ENCODE measurements at regions of chr1 and their contacts with region 1.

Region 1: DNA sequence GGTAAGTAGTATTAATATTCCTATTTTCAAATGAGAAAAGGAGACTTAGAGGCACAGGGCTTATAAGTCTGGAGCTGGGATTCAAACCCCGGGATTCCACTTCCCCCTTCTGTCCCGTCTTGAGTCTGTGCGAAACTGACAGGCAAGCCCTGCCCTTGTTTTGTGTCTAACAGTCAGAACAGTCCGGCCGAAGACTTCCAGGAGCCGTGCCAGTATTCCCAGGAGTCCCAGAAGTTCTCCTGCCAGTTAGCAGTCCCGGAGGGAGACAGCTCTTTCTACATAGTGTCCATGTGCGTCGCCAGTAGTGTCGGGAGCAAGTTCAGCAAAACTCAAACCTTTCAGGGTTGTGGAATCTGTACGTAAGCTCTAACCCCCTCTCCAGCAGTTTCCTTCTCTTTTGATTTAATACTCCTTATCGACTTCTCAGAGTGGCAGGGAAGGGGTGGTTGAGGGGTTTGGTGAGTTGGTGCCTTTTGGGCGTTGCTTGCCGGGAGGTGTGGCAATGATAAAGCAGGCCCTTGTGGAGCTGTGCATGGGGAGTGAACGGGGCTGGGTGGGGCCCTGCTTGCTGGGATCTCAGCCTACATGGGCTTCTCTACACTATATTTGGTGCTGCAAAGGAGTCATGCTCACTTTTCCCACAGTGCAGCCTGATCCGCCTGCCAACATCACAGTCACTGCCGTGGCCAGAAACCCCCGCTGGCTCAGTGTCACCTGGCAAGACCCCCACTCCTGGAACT is 29.4 kb downstream of the IL6R start:
- DNase-seq: no peak
- H3K4me3 ChIP-seq: no peak overlapping the region
- H3K27ac ChIP-seq: no peak overlapping the region
- H3K4me1 ChIP-seq: peaks cover 38% of the 10 kb centered on the region
- H3K27me3 ChIP-seq: no peaks in the 10 kb centered on the region
- CTCF ChIP-seq: no peak

Region 2: GRCh38 chr1:154352581-154353459 is 81.7 kb before region 1 on chr1:
- CTCF ChIA-PET with region 1: no interaction called
- dilution Hi-C with region 1: loop called (anchors 5 kb)
- in situ Hi-C with region 1: no loop called
- intact Hi-C with region 1: no loop called
- DNase-seq: peak; percentile 9
- H3K4me3 ChIP-seq: peak overlapping the region; percentile 0 to 36 (median 33)
- H3K27ac ChIP-seq: no peak overlapping the region
- H3K4me1 ChIP-seq: peaks cover 15% of the 10 kb centered on the region
- H3K27me3 ChIP-seq: no peaks in the 10 kb centered on the region
- CTCF ChIP-seq: no peak

Region 3: DNA sequence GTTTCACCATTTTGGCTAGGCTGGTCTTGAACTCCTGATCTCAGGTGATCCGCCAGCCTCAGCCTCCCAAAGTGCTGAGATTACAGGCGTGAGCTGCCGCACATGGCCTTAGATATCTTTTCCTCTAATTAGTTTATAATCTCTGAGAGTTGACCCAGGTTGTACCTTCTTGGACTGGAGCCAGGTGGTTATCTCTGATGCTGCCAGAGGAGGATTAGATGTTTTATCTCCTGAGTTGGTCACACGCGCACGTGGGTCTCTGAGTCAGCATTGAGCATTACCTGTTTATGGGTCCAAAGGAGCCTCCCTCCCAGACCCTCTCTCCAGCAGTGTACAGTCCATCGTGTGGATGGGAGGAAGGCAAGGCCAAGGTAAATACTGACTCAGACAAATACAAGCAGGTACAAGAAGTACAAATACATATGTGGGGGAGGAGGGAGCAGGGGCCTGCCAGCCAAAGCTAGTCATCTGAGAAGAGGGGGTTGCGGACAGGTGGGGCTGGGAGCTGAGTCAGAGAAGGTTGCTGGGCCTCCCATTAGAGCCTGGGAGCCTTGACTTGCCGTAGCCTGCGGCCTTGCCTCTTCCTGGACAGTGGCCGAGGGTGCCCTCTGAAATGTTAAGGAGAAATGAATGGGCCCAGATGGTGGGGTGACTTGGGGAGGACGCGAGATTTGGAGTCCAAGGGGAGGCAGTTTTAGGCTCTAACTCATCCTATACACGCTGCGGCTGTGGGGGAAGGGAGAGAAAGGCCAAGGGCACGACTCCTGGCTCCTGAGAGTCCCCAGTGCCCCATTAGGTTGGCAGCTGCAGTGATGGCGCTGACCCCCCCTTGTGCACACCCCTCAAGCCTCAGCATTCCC is 16.2 kb before region 1 on chr1:
- CTCF ChIA-PET with region 1: no interaction called
- dilution Hi-C with region 1: no loop called
- in situ Hi-C with region 1: no loop called
- intact Hi-C with region 1: loop called (anchors 1 kb)
- DNase-seq: peak; percentile 99
- H3K4me3 ChIP-seq: no peak overlapping the region
- H3K27ac ChIP-seq: peak overlapping the region; percentile 79
- H3K4me1 ChIP-seq: peaks cover 46% of the 10 kb centered on the region
- H3K27me3 ChIP-seq: no peaks in the 10 kb centered on the region
- CTCF ChIP-seq: no peak

Region 4: GRCh38 chr1:154490317-154490716 is 55.8 kb after region 1 on chr1:
- CTCF ChIA-PET with region 1: no interaction called
- dilution Hi-C with region 1: no loop called
- in situ Hi-C with region 1: no loop called
- intact Hi-C with region 1: no loop called
- DNase-seq: no peak
- H3K4me3 ChIP-seq: no peak overlapping the region
- H3K27ac ChIP-seq: no peak overlapping the region
- H3K4me1 ChIP-seq: no peaks in the 10 kb centered on the region
- H3K27me3 ChIP-seq: peaks cover 2% of the 10 kb centered on the region
- CTCF ChIP-seq: no peak

Region 5: GRCh38 chr1:154741741-154742495 is 307.4 kb after region 1 on chr1:
- CTCF ChIA-PET with region 1: no interaction called
- dilution Hi-C with region 1: no loop called
- in situ Hi-C with region 1: no loop called
- intact Hi-C with region 1: no loop called
- DNase-seq: no peak
- H3K4me3 ChIP-seq: no peak overlapping the region
- H3K27ac ChIP-seq: no peak overlapping the region
- H3K4me1 ChIP-seq: no peaks in the 10 kb centered on the region
- H3K27me3 ChIP-seq: peaks cover 2% of the 10 kb centered on the region
- CTCF ChIP-seq: no peak